B cell (primary cell): ENCODE measurements at regions of chr17 and their contacts with region 1.

Region 1: DNA sequence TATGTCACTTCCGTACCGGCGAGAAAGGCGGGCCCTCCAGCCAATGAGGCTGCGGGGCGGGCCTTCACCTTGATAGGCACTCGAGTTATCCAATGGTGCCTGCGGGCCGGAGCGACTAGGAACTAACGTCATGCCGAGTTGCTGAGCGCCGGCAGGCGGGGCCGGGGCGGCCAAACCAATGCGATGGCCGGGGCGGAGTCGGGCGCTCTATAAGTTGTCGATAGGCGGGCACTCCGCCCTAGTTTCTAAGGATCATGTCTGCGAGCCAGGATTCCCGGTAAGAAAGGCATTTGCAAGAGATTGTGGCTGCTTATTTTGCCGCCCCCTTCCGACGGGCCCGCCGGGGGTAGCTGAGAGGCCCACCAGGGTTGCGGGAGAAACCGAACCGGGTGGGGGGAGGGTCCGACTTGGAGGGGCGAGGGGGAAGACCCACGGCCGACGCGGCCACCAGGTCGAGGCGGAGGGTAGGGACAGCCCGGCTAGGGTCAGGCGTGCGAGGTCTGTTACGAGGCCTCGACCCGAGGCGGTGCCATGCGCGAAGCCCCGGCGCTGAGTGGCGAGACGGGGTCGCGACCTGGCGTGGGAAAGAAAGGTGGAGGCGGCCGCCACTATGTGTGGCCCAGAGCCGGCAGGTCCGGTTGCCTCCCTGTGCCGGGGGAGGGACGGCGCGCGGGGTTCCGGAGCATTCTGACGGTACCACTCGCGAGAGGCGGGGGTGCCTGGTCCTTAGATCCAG is 6.7 kb upstream of the CD68 start:
- DNase-seq: peak; percentile 100
- ATAC-seq: peak; percentile 83
- H3K4me3 ChIP-seq: peak overlapping the region; percentile 72 to 98 (median 93)
- H3K4me3 Mint-ChIP-seq: peak overlapping the region; percentile 94
- H3K27ac ChIP-seq: peak overlapping the region; percentile 85 to 94
- H3K27ac Mint-ChIP-seq: peak overlapping the region; percentile 99
- H3K4me1 ChIP-seq: peaks cover 22 to 29% of the 10 kb centered on the region in 2 donors
- H3K4me1 Mint-ChIP-seq: peaks cover 52% of the 10 kb centered on the region
- H3K27me3 ChIP-seq: no peaks in the 10 kb centered on the region
- H3K27me3 Mint-ChIP-seq: no peaks in the 10 kb centered on the region
- CTCF ChIP-seq: no peak

Region 2: GRCh38 chr17:7014261-7014994 is 558.3 kb before region 1 on chr17:
- CTCF ChIA-PET with region 1: no interaction called
- POLR2A ChIA-PET with region 1: no interaction called
- intact Hi-C with region 1: loop called (anchors 10 kb)
- DNase-seq: peak; percentile 99
- ATAC-seq: peak; percentile 81
- H3K4me3 ChIP-seq: peak overlapping the region; percentile 95 to 100 (median 96)
- H3K4me3 Mint-ChIP-seq: peak overlapping the region; percentile 99
- H3K27ac ChIP-seq: peak overlapping the region; percentile 97 to 99
- H3K27ac Mint-ChIP-seq: peak overlapping the region; percentile 100
- H3K4me1 ChIP-seq: peaks cover 40 to 59% of the 10 kb centered on the region in 2 donors
- H3K4me1 Mint-ChIP-seq: peaks cover 54% of the 10 kb centered on the region
- H3K27me3 ChIP-seq: no peaks in the 10 kb centered on the region
- H3K27me3 Mint-ChIP-seq: no peaks in the 10 kb centered on the region
- CTCF ChIP-seq: peak; percentile 76

Region 3: DNA sequence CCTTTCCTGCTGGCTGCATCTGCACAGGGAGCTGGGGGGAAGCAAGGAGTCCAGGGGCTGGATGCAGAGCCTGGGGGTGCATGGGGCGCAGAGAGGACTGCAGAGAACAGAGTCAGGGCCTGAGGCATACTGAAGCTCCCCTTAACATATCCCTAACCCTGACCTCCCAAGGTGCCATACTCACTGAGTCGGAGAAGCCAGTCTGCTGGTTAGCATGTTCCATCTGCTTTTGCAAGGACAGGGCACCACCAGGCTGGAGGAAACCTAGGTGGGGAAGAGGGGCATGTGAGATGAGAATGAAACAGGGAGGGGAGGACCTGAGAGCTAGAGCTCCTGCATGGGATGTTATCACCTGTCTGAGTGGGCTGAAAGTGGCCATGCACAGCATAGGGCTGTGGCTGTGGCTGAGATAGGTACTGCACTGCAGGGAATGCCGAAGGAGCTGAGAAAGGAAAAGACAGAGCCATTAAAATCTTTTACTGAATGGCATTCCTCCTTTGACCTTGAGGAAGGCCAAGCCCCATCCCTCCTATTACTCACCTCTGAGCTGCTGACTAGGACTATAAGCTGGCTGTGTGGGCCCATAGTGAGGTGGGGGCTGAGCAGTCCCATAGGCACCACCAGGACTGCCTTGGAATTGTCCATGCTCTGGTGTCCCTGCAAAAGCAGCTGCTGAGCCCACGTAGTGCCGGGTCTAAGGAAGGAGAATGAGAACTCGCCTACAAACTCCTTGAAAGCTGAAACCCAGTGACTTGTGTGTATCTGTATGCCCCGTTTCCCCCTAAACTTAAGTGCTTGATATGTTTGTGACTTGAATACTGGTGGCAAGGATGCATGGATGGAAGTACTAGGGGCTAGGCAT is 259.5 kb before region 1 on chr17:
- CTCF ChIA-PET with region 1: no interaction called
- POLR2A ChIA-PET with region 1: no interaction called
- intact Hi-C with region 1: no loop called
- DNase-seq: no peak
- ATAC-seq: no peak
- H3K4me3 ChIP-seq: no peak overlapping the region
- H3K4me3 Mint-ChIP-seq: peak overlapping the region; percentile 87
- H3K27ac ChIP-seq: peak overlapping the region in 1 of 2 donors; percentile 91
- H3K27ac Mint-ChIP-seq: peak overlapping the region; percentile 93
- H3K4me1 ChIP-seq: peaks cover 34 to 60% of the 10 kb centered on the region in 2 donors
- H3K4me1 Mint-ChIP-seq: peaks cover 69% of the 10 kb centered on the region
- H3K27me3 ChIP-seq: no peaks in the 10 kb centered on the region
- H3K27me3 Mint-ChIP-seq: no peaks in the 10 kb centered on the region
- CTCF ChIP-seq: peak; percentile 17

Region 4: DNA sequence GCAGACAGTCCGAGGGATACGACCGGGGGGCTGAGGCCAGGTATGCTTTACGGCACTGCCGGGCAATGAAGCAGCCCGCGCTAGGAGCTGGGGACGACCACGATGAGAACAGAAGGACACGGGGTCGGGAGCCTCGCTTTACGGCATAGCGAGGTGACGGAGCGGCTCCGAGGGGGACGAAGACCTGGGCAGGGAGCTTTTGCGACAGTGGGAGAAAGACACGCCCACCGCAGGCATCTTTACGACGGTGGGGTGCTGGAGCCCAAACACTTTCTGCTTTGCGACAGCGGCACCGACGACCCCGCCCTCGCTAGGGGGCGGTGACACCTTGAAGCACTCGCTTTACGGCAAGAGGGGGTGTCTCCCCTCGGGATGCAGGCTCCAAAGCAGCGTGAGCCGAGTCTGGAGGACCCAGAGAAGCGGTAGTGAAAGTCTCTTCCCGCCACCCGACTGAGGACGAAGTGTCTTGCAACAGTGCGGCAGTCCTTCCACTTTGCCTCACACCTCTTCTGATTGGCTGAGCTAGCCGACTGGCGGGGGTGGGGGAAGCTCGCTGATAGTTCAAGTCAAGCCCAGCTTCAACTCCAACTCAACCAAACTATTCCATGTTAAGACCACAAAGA is 243.3 kb before region 1 on chr17:
- CTCF ChIA-PET with region 1: no interaction called
- POLR2A ChIA-PET with region 1: no interaction called
- intact Hi-C with region 1: loop called (anchors 1 kb)
- DNase-seq: peak; percentile 100
- ATAC-seq: peak; percentile 71
- H3K4me3 ChIP-seq: peak overlapping the region; percentile 65 to 92 (median 81)
- H3K4me3 Mint-ChIP-seq: peak overlapping the region; percentile 96
- H3K27ac ChIP-seq: peak overlapping the region; percentile 86 to 93
- H3K27ac Mint-ChIP-seq: peak overlapping the region; percentile 98
- H3K4me1 ChIP-seq: peaks cover 23 to 46% of the 10 kb centered on the region in 2 donors
- H3K4me1 Mint-ChIP-seq: peaks cover 40% of the 10 kb centered on the region
- H3K27me3 ChIP-seq: no peaks in the 10 kb centered on the region
- H3K27me3 Mint-ChIP-seq: no peaks in the 10 kb centered on the region
- CTCF ChIP-seq: no peak

Region 5: DNA sequence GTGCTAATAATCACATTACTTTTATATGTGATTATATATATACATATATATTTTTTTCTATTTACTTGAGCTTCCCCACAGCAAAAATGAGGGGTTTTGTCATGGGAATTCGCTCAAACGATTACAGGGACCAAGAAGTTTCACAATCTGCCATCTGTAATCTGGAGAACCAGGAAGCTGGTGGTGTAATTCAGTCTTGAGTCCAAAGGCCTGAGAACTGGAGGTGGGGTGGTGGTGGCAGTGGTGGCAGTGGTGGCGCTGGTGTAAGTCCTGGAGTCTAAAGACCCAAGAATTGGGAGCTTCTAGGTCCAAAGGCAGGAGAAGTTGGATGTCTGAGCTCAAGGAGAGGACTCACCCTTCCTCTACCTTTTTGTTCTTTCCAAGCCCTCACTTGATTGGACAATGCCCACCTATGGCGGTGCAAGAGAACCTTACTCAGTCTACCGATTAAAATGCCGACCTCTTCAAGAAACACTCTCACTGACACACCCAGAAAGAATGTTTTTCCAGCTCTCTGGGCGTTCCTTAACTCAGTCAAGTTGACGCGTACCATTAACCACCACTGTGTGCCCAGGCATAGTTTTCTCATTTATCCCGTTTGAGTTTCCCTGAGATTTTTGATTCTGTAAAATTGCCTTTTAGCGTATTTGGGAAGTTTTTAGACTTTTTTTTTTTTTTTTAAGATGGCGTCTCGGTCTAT is 56.7 kb before region 1 on chr17:
- CTCF ChIA-PET with region 1: interaction called, 666 read pairs
- POLR2A ChIA-PET with region 1: no interaction called
- intact Hi-C with region 1: no loop called
- DNase-seq: no peak
- ATAC-seq: no peak
- H3K4me3 ChIP-seq: no peak overlapping the region
- H3K4me3 Mint-ChIP-seq: no peak overlapping the region
- H3K27ac ChIP-seq: no peak overlapping the region
- H3K27ac Mint-ChIP-seq: no peak overlapping the region
- H3K4me1 ChIP-seq: no peaks in the 10 kb centered on the region
- H3K4me1 Mint-ChIP-seq: no peaks in the 10 kb centered on the region
- H3K27me3 ChIP-seq: no peaks in the 10 kb centered on the region
- H3K27me3 Mint-ChIP-seq: no peaks in the 10 kb centered on the region
- CTCF ChIP-seq: no peak

Region 6: DNA sequence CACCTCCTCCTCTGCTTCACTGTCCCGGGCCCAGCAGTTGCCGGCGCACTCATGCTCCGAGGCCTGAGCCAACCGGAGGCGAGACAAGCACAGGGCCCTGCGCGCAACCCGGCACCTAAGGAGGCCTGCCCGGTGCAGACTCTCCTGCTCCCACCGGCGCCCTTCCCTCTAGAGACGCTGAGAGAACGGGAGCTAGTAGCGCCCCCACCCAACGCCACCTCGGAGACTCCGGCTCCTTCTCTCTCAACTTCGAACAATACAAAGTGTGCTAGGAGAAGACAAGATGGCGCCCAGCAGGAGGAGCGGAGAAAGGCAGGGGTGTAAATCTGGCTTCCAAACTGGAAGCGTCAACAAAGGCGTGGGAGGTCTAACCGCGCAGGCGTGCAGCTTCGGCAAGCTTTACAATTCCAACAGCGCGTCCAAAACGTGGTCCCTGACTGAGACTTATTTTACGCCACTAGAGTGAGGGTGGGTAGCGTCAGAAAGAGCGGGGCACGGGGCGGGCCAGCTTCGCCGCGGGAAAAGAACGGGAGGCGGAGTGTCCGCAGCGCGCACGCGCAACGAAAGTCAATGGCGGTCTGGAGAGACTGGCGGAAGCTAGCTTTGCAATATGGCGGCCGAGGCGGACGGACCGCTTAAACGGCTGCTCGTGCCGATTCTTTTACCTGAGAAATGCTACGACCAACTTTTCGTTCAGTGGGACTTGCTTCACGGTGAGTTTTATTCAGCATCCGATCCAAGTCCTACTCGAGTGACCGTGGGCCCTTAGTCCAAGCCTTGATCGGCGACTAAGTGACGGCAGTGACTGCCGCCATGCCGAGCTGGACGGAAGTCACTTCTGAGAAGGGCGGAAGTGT is 10.7 kb after region 1 on chr17 and contains the start of gene MPDU1:
- CTCF ChIA-PET with region 1: interaction called, 15 read pairs
- POLR2A ChIA-PET with region 1: interaction called, 15 read pairs
- intact Hi-C with region 1: loop called (anchors 1 kb)
- DNase-seq: peak; percentile 98
- ATAC-seq: peak; percentile 78
- H3K4me3 ChIP-seq: peak within 1 kb of the TSS; percentile 77 to 96 (median 86)
- H3K4me3 Mint-ChIP-seq: peak within 1 kb of the TSS; percentile 100
- H3K27ac ChIP-seq: peak within 1 kb of the TSS; percentile 91 to 95
- H3K27ac Mint-ChIP-seq: peak within 1 kb of the TSS; percentile 100
- H3K4me1 ChIP-seq: peaks cover 48 to 68% of the 10 kb centered on the region in 2 donors
- H3K4me1 Mint-ChIP-seq: peaks cover 57% of the 10 kb centered on the region
- H3K27me3 ChIP-seq: no peaks in the 10 kb centered on the region
- H3K27me3 Mint-ChIP-seq: no peaks in the 10 kb centered on the region
- CTCF ChIP-seq: no peak
- total RNA-seq, gene MPDU1: 29.7 and 31.7 TPM in 2 replicates

Region 7: GRCh38 chr17:7703584-7704479 is 131.1 kb after region 1 on chr17:
- CTCF ChIA-PET with region 1: no interaction called
- POLR2A ChIA-PET with region 1: no interaction called
- intact Hi-C with region 1: no loop called
- DNase-seq: peak; percentile 54
- ATAC-seq: peak; percentile 28
- H3K4me3 ChIP-seq: no peak overlapping the region
- H3K4me3 Mint-ChIP-seq: peak overlapping the region; percentile 74
- H3K27ac ChIP-seq: no peak overlapping the region
- H3K27ac Mint-ChIP-seq: no peak overlapping the region
- H3K4me1 ChIP-seq: peaks cover 19 to 23% of the 10 kb centered on the region in 2 donors
- H3K4me1 Mint-ChIP-seq: peaks cover 15% of the 10 kb centered on the region
- H3K27me3 ChIP-seq: peaks cover 0 to 61% (median 19%) of the 10 kb centered on the region in 4 experiments
- H3K27me3 Mint-ChIP-seq: peaks cover 48% of the 10 kb centered on the region
- CTCF ChIP-seq: no peak

Region 8: DNA sequence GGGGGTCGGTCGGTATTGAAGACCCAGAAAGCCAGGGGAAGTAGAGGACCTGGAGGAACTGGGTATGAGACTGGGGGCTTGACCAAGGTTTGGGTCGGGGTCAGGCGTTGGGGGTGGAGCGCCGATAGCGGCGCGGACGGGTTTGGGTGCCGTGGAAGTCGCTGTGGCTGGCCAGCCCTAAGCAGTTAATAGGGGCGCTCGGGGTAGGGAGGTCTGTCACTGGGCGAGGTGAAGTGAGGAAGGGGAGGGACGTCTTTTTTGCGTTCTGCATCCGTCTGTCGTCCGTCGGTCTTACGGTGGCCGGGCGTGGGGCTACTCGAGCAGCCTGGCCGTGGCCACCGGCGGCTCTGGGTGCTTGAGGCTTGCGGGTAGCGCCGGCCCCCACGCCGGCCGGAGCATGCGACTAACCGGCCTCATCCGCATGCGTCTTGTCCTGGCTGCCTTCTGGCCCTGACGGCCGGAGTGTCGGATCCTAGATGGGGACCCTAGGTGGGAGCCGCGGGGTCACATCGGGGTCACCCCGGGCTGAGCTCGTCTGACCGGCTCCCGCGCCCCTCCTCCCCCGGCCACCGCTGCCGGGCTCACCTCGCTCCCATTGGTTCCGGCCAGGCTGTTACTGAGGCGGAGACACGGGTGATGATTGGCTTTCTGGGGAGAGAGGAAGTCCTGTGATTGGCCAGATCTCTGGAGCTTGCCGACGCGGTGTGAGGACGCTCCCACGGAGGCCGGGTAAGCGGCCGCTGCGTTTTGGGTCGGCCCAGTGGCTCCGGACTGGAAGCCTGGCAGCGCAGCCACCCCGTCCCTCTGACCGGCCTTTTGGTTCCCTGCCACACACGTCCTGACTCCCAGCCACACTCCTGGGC is 271.8 kb after region 1 on chr17:
- CTCF ChIA-PET with region 1: no interaction called
- POLR2A ChIA-PET with region 1: no interaction called
- intact Hi-C with region 1: loop called (anchors 2 kb)
- DNase-seq: peak; percentile 93
- ATAC-seq: peak; percentile 41
- H3K4me3 ChIP-seq: peak overlapping the region; percentile 67 to 95 (median 93)
- H3K4me3 Mint-ChIP-seq: peak overlapping the region; percentile 100
- H3K27ac ChIP-seq: peak overlapping the region; percentile 100
- H3K27ac Mint-ChIP-seq: peak overlapping the region; percentile 100
- H3K4me1 ChIP-seq: peaks cover 20 to 49% of the 10 kb centered on the region in 2 donors
- H3K4me1 Mint-ChIP-seq: peaks cover 39% of the 10 kb centered on the region
- H3K27me3 ChIP-seq: no peaks in the 10 kb centered on the region
- H3K27me3 Mint-ChIP-seq: no peaks in the 10 kb centered on the region
- CTCF ChIP-seq: no peak